Activated B cell treated with CpG ODN at 0.5 μM for 24 hours (primary cell): ENCODE measurements at regions of chr7 and their contacts with region 1.

Region 1: GRCh38 chr7:101077303-101078089 is 7.8 kb upstream of the TRIM56 start:
- DNase-seq: peak; percentile 67
- ATAC-seq: peak; percentile 94
- H3K4me3 Mint-ChIP-seq: peak overlapping the region; percentile 8
- H3K27ac Mint-ChIP-seq: peak overlapping the region; percentile 33
- H3K4me1 Mint-ChIP-seq: peaks cover 9% of the 10 kb centered on the region
- H3K27me3 Mint-ChIP-seq: no peaks in the 10 kb centered on the region
- CTCF ChIP-seq: peak; percentile 32

Region 2: GRCh38 chr7:100803398-100804233 is 273.9 kb before region 1 on chr7:
- CTCF ChIA-PET with region 1: no interaction called
- POLR2A ChIA-PET with region 1: no interaction called
- intact Hi-C with region 1: loop called (anchors 5 kb)
- DNase-seq: peak; percentile 62
- ATAC-seq: peak; percentile 97
- H3K4me3 Mint-ChIP-seq: peak overlapping the region; percentile 76
- H3K27ac Mint-ChIP-seq: peak overlapping the region; percentile 84
- H3K4me1 Mint-ChIP-seq: peaks cover 36% of the 10 kb centered on the region
- H3K27me3 Mint-ChIP-seq: no peaks in the 10 kb centered on the region
- CTCF ChIP-seq: no peak

Region 3: DNA sequence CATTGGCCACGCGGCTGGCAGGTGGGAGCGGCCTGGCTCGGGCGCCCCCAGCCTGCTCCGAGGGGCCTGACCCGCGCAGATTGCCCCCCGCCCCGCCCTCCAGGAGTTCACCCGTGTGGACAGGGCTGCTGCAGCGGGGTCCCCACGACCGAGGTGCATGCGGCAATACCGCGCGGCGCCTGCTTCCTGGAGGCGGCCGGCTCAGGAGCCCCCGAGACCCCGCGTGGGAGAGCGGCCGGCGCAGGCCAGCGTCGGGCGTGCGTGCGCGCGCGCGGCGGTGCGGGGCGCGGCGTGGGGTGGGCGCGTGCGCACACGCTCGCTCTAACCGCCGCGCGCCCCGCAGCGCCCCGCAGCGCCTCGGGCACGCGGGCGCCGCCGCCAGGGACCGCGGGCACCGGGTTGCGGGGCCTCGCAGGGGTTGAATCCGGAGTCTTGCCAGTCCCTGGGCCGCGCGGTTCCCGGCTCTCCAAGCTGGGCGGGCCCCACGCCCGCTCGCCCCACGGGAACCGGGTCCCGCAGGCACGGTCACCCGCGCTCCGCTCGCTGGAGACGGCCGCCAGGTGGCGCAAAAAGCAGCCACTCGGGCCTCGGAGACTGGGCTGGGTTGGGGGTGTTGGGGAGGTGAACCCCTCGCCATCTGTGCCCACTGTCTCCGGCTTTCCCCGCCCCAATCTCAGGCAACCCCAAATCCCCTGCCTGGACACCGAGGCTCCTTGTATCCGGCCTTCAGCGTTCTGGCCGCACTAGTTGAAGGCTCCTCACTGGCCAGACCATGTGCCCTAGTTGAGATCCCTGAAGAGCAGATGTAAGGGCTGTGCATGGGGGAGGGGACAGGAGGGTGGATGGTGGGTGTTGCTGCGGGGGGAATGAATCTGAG is 180.5 kb before region 1 on chr7:
- CTCF ChIA-PET with region 1: interaction called, 5 read pairs
- POLR2A ChIA-PET with region 1: no interaction called
- intact Hi-C with region 1: loop called (anchors 1 kb)
- DNase-seq: peak; percentile 67
- ATAC-seq: peak; percentile 63
- H3K4me3 Mint-ChIP-seq: peak overlapping the region; percentile 84
- H3K27ac Mint-ChIP-seq: no peak overlapping the region
- H3K4me1 Mint-ChIP-seq: peaks cover 10% of the 10 kb centered on the region
- H3K27me3 Mint-ChIP-seq: peaks cover 35% of the 10 kb centered on the region
- CTCF ChIP-seq: no peak

Region 4: GRCh38 chr7:101017064-101017777 is 60.3 kb before region 1 on chr7:
- CTCF ChIA-PET with region 1: no interaction called
- POLR2A ChIA-PET with region 1: no interaction called
- intact Hi-C with region 1: loop called (anchors 5 kb)
- DNase-seq: peak; percentile 43
- ATAC-seq: peak; percentile 87
- H3K4me3 Mint-ChIP-seq: peak overlapping the region; percentile 74
- H3K27ac Mint-ChIP-seq: no peak overlapping the region
- H3K4me1 Mint-ChIP-seq: peaks cover 21% of the 10 kb centered on the region
- H3K27me3 Mint-ChIP-seq: peaks cover 15% of the 10 kb centered on the region
- CTCF ChIP-seq: no peak

Region 5: GRCh38 chr7:101031082-101031481 is 46.4 kb before region 1 on chr7:
- CTCF ChIA-PET with region 1: no interaction called
- POLR2A ChIA-PET with region 1: no interaction called
- intact Hi-C with region 1: no loop called
- DNase-seq: no peak
- ATAC-seq: no peak
- H3K4me3 Mint-ChIP-seq: no peak overlapping the region
- H3K27ac Mint-ChIP-seq: no peak overlapping the region
- H3K4me1 Mint-ChIP-seq: no peaks in the 10 kb centered on the region
- H3K27me3 Mint-ChIP-seq: peaks cover 8% of the 10 kb centered on the region
- CTCF ChIP-seq: no peak

Region 6: GRCh38 chr7:101058355-101058754 is 19.1 kb before region 1 on chr7:
- CTCF ChIA-PET with region 1: interaction called, 7 read pairs
- POLR2A ChIA-PET with region 1: no interaction called
- intact Hi-C with region 1: loop called (anchors 1 kb)
- DNase-seq: peak; percentile 43
- ATAC-seq: no peak
- H3K4me3 Mint-ChIP-seq: no peak overlapping the region
- H3K27ac Mint-ChIP-seq: no peak overlapping the region
- H3K4me1 Mint-ChIP-seq: no peaks in the 10 kb centered on the region
- H3K27me3 Mint-ChIP-seq: peaks cover 32% of the 10 kb centered on the region
- CTCF ChIP-seq: no peak

Region 7: DNA sequence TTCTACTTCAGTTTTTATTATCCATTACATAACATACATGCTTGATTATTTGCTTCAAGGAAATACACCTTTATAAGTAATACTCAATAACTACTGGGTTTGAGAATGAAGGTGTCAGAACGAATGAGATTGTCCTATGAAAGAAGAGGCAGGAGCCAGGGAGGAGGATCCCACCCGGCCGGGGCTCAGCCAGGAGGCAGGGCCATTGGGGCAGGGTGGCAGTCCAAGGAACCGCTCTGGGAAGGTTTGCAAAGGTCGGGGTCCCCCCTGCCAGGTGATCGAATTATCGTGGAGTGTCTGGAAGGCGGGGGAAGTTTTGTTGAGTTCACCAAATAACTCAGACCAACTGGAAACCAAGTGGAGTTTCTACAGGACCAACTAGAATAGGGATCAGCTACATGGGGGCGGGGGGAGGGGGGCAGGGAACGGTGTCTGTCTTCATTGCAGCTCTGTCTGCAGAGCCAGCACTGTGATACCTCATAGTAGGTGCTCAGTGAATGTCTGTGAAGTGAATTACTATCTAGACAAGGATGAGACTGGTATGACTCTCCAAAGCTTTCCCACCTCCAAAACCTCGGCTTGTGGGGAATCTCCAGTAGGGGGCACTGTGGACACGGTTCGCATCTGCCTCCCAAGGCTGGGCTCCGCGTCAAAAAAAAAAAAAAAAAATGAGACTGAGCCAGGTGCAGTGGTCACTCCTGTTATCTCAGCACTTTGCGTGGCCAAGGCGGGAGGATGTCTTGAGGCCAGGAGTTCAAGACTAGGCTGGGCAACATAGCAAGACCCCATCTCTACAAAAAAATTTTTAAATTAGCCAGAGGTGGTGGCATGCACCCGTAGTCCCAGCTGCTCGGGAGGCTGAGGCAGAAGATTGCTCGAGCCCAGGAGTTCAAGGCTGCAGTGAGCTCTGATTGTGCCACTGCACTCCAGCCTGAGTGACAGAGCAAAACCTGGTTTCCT is 17.2 kb after region 1 on chr7:
- CTCF ChIA-PET with region 1: no interaction called
- POLR2A ChIA-PET with region 1: no interaction called
- intact Hi-C with region 1: loop called (anchors 1 kb)
- DNase-seq: no peak
- ATAC-seq: no peak
- H3K4me3 Mint-ChIP-seq: no peak overlapping the region
- H3K27ac Mint-ChIP-seq: peak overlapping the region; percentile 37
- H3K4me1 Mint-ChIP-seq: peaks cover 5% of the 10 kb centered on the region
- H3K27me3 Mint-ChIP-seq: no peaks in the 10 kb centered on the region
- CTCF ChIP-seq: no peak